GM12878 (cell line): ENCODE measurements at regions of chr7 and their contacts with region 1.

Region 1: DNA sequence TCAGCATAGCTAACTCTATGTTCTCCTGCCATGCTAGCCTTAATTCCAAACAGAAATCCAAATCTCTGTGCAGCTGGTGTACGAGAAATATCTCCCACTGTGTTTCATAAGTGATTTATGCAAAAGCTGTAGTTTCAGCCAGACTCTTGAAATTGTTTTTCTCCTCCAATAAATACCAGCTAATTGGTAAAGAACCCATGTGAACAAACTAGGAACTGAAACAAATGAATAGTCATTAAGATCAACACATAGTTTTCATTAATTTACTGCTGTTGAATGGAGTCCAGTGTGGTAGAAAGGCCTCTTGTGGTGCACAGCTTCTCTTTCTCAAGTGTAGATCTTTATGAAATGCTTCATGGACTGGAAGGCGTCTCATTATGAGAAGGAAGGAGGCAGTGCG is 18.4 kb downstream of the PPP1R17 start:
- DNase-seq: peak; percentile 37
- ATAC-seq: peak; percentile 83
- H3K4me3 ChIP-seq: no peak overlapping the region
- H3K27ac ChIP-seq: no peak overlapping the region
- H3K4me1 ChIP-seq: no peaks in the 10 kb centered on the region
- H3K27me3 ChIP-seq: peaks cover 0 to 3% of the 10 kb centered on the region in 2 experiments; a peak in 1 of 4 replicates
- CTCF ChIP-seq: no peak
- EP300 ChIP-seq: no peak
- POLR2A ChIP-seq: no peak
- RAD21 ChIP-seq: no peak

Region 2: DNA sequence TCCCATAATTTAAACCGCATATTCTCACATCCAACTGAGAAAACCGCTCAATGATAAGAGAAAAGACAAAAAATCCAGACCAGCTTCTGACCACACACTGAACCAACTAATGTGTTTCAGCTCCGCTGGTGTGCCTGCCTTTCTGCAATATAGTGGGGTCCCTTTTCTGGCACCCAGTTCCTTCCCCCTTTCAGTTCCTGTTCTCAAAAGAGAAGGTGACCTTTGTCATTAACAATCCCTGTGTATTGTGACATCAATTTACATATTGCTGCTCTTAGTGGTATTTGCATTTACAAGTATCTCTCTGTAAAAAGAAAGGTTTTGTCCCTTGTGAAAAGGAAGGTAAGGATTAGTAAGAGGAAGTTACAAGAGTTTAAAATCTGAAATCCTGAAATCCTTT is 17.0 kb before region 1 on chr7:
- CTCF ChIA-PET with region 1: interaction called, 12 read pairs
- POLR2A ChIA-PET with region 1: no interaction called
- RAD21 ChIA-PET with region 1: interaction called, 13 read pairs
- SMC1A ChIA-PET with region 1: interaction called, 10 read pairs
- in situ Hi-C with region 1: no loop called
- intact Hi-C with region 1: no loop called
- DNase-seq: peak; percentile 65
- ATAC-seq: peak; percentile 96
- H3K4me3 ChIP-seq: peak overlapping the region; percentile 36; the same call in 1 of the 2 replicates
- H3K27ac ChIP-seq: no peak overlapping the region; the same call in 1 of the 2 replicates
- H3K4me1 ChIP-seq: peaks cover 19% of the 10 kb centered on the region
- H3K27me3 ChIP-seq: no peaks in the 10 kb centered on the region; a peak in 1 of 4 replicates
- CTCF ChIP-seq: no peak
- EP300 ChIP-seq: 0 out of 4 replicates have a peak, but pooled peaks of 1 of the 2 experiments have one; percentile 14
- POLR2A ChIP-seq: no peak
- RAD21 ChIP-seq: no peak

Region 3: DNA sequence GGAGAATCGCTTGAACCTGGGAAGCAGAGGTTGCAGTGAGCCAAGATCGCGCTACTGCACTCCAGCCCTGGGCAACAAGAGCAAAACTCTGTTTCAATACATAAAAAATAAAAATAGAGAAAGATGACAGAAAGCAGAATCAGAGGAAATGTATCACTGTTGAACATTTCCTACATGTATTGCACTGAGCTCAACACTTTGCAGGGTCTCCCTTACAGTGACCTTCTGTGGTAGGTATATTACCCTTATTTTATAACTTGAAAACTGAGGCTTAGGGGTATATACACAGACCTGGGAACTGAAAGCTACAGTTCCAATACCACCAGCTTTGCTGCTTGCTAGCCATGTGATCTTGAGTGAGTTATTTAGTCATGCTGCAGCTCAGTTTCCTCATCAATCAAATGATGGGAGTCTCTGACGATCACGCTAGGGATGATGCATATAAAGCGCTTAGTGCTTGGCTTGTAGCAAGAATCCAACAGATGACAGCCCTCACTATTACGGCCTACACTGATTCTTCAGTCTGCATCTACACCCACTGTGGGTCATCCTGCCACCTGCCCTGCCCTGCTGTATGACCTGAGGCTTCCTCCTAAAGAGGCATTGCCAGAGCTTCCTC is 265.8 kb after region 1 on chr7:
- CTCF ChIA-PET with region 1: no interaction called
- POLR2A ChIA-PET with region 1: no interaction called
- RAD21 ChIA-PET with region 1: no interaction called
- SMC1A ChIA-PET with region 1: no interaction called
- in situ Hi-C with region 1: no loop called
- intact Hi-C with region 1: no loop called
- DNase-seq: no peak
- ATAC-seq: no peak
- H3K4me3 ChIP-seq: no peak overlapping the region
- H3K27ac ChIP-seq: no peak overlapping the region
- H3K4me1 ChIP-seq: no peaks in the 10 kb centered on the region
- H3K27me3 ChIP-seq: no peaks in the 10 kb centered on the region; a peak in 2 of 4 replicates
- CTCF ChIP-seq: no peak
- EP300 ChIP-seq: no peak
- POLR2A ChIP-seq: no peak
- RAD21 ChIP-seq: no peak